ENCODE measurements at regions of chr17 and their contacts with region 1.

Region 1: GRCh38 chr17:74736513-74737298 is at the start of gene RAB37:
- DNase-seq: peak; percentile 74
- ATAC-seq: peak; percentile 73
- H3K4me3 Mint-ChIP-seq: peak within 1 kb of the TSS; percentile 85
- H3K27ac Mint-ChIP-seq: peak within 1 kb of the TSS; percentile 88
- H3K4me1 Mint-ChIP-seq: peaks cover 49% of the 10 kb centered on the region
- H3K27me3 Mint-ChIP-seq: no peaks in the 10 kb centered on the region
- CTCF ChIP-seq: no peak
- total RNA-seq, gene RAB37: 11.0 and 11.1 TPM in 2 replicates

Region 2: DNA sequence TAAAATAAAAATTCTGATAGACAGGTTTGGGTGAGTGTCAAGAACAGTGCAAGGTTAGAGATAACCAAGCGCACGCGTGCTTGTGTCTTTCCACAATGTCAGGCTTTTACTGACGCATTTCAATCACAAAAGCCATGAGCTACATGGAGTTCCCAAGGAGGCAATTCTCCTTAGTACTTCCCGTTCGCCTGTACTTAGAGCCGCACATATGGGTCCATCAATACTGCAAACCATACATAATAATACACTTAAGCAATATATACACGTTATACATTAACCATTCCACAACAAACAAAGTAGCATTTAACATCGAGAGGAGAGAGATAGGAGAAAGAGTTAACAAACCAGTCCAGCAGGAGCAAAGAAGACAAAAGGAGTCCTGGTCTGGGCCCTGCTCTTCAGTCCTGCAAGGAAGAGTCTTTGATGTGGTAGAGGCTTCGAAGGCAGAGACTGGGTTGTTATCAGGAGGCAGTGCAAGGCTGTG is 316.7 kb before region 1 on chr17:
- CTCF ChIA-PET with region 1: no interaction called
- POLR2A ChIA-PET with region 1: no interaction called
- intact Hi-C with region 1: no loop called
- DNase-seq: no peak
- ATAC-seq: no peak
- H3K4me3 Mint-ChIP-seq: no peak overlapping the region
- H3K27ac Mint-ChIP-seq: no peak overlapping the region
- H3K4me1 Mint-ChIP-seq: peaks cover 19% of the 10 kb centered on the region
- H3K27me3 Mint-ChIP-seq: peaks cover 14% of the 10 kb centered on the region
- CTCF ChIP-seq: no peak

Region 3: DNA sequence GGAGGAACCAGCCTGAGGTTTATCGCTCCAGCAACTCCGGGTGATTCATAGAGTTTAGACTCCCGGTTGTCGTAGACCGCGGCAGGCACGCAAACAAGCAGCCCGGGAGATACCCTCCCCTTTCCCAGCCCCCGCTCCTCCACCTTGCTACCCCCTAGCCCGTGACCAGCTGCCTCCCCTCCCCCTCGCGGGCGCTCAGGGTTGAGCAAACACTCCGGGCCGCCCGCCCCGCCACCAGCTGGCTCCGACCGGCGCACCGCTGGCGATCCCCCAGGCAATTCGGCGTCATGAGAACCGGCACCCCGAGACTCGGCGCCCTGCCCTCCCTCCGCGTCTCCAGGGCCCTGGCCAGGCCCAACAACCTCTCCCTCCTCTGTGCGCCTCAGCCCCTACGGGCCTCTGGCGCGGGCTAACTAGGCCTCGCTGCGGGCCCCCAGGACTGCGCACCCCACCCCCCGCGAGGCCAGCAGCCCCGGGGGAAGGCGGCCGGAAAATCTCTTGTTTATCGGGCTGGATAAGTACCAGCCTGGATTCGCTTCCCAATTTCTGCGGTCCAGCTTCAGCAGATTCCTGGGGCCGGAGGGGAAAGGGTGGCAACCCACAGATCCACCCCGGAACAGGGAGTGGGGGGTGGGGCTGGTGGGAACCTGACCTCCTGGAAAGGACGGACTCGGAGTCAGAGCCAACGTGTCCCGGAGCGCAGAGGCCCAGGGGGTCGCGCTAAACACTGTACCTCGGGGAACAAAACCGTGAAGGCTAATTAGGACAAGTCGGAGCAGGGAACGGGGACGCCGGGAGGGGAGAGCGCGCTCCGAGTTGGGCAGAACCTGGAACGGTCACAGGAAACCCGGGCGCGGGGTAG is 305.8 kb before region 1 on chr17:
- CTCF ChIA-PET with region 1: no interaction called
- POLR2A ChIA-PET with region 1: no interaction called
- intact Hi-C with region 1: loop called (anchors 10 kb)
- DNase-seq: peak; percentile 65
- ATAC-seq: peak; percentile 85
- H3K4me3 Mint-ChIP-seq: peak overlapping the region; percentile 73
- H3K27ac Mint-ChIP-seq: peak overlapping the region; percentile 88
- H3K4me1 Mint-ChIP-seq: peaks cover 21% of the 10 kb centered on the region
- H3K27me3 Mint-ChIP-seq: peaks cover 47% of the 10 kb centered on the region
- CTCF ChIP-seq: no peak

Region 4: GRCh38 chr17:74566132-74566753 is 170.5 kb before region 1 on chr17:
- CTCF ChIA-PET with region 1: interaction called, 21 read pairs
- POLR2A ChIA-PET with region 1: no interaction called
- intact Hi-C with region 1: loop called (anchors 1 kb)
- DNase-seq: no peak
- ATAC-seq: peak; percentile 54
- H3K4me3 Mint-ChIP-seq: no peak overlapping the region
- H3K27ac Mint-ChIP-seq: no peak overlapping the region
- H3K4me1 Mint-ChIP-seq: peaks cover 9% of the 10 kb centered on the region
- H3K27me3 Mint-ChIP-seq: peaks cover 40% of the 10 kb centered on the region
- CTCF ChIP-seq: no peak

Region 5: DNA sequence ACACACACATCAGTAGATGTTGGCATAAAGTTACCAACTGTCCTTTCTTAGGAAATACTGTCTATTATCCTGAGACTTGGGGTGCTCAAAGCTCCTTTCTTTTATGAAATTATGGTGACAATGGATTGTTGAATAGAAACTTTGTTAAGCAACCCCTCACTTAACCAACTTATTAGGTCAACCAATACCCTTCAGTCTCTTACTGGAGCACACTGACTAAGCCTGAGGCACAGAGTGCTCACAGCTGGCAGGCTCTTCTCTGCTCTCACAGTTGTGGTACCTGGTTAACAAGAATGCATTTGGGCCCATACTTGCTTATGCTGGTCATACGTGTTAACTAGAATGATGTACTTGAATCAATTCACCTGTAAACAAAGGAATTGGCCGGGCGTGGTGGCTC is 48.8 kb before region 1 on chr17:
- CTCF ChIA-PET with region 1: interaction called, 8 read pairs
- POLR2A ChIA-PET with region 1: interaction called, 3 read pairs
- intact Hi-C with region 1: loop called (anchors 2 kb)
- DNase-seq: no peak
- ATAC-seq: no peak
- H3K4me3 Mint-ChIP-seq: no peak overlapping the region
- H3K27ac Mint-ChIP-seq: no peak overlapping the region
- H3K4me1 Mint-ChIP-seq: peaks cover 31% of the 10 kb centered on the region
- H3K27me3 Mint-ChIP-seq: peaks cover 8% of the 10 kb centered on the region
- CTCF ChIP-seq: no peak

Region 6: DNA sequence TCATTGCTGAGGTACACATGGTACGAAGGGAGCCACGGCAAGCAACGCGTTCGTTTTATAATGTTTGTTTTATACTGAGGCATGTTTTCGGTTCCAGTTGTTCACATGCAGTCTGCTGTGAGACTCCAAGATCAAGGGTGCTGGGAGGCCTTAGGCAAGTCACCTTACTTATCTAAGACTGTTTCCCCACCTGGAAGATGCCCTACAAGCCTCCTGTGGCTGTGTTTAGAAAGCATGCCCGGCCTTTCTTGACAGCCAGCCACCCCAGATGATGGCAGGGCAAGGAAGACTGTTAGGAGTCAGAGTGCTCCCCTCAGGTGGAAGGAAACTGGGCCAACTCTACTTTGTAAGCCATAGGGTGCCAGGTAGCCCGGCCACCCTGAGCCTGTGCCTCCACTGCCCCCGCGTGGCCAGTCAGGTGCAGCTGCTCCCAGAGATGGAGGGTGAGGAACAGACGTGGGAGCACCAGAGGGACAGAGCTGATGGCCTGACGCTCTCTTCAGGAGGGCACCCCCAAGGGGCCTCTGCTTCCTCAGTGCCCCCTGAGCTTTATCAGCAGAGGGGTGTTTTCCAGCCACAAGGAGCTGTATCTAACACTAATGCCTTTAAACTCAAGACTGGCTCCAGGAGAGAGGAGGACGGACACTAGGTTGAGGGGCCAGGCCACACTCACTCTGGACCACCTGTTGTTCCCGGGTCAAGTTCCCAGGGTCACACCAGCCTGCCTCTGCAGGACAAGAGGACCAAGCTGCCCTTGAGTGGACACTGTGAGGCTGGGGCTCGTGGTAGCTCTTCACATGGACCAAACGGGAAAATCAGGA is 34.0 kb after region 1 on chr17:
- CTCF ChIA-PET with region 1: interaction called, 16 read pairs
- POLR2A ChIA-PET with region 1: interaction called, 8 read pairs
- intact Hi-C with region 1: no loop called
- DNase-seq: peak; percentile 57
- ATAC-seq: peak; percentile 97
- H3K4me3 Mint-ChIP-seq: no peak overlapping the region
- H3K27ac Mint-ChIP-seq: peak overlapping the region; percentile 46
- H3K4me1 Mint-ChIP-seq: peaks cover 18% of the 10 kb centered on the region
- H3K27me3 Mint-ChIP-seq: no peaks in the 10 kb centered on the region
- CTCF ChIP-seq: no peak

Region 7: GRCh38 chr17:74776044-74776977 is 39.6 kb after region 1 on chr17 and contains the start of gene NAT9:
- CTCF ChIA-PET with region 1: interaction called, 16 read pairs
- POLR2A ChIA-PET with region 1: interaction called, 8 read pairs
- intact Hi-C with region 1: no loop called
- DNase-seq: peak; percentile 99
- ATAC-seq: peak; percentile 82
- H3K4me3 Mint-ChIP-seq: peak within 1 kb of the TSS; percentile 99
- H3K27ac Mint-ChIP-seq: peak within 1 kb of the TSS; percentile 89
- H3K4me1 Mint-ChIP-seq: peaks cover 61% of the 10 kb centered on the region
- H3K27me3 Mint-ChIP-seq: no peaks in the 10 kb centered on the region
- CTCF ChIP-seq: no peak
- total RNA-seq, gene NAT9: 59.4 and 79.7 TPM in 2 replicates